Mammary epithelial cell (primary cell): ENCODE measurements at regions of chr2 and their contacts with region 1.

Region 1: GRCh38 chr2:142980561-142981378 is 103.3 kb downstream of the KYNU start:
- DNase-seq: peak; percentile 47
- H3K4me3 ChIP-seq: no peak overlapping the region
- H3K27ac ChIP-seq: peak overlapping the region; percentile 63
- H3K4me1 ChIP-seq: peaks cover 15% of the 10 kb centered on the region
- H3K27me3 ChIP-seq: no peaks in the 10 kb centered on the region
- CTCF ChIP-seq: peak; percentile 42 to 50

Region 2: DNA sequence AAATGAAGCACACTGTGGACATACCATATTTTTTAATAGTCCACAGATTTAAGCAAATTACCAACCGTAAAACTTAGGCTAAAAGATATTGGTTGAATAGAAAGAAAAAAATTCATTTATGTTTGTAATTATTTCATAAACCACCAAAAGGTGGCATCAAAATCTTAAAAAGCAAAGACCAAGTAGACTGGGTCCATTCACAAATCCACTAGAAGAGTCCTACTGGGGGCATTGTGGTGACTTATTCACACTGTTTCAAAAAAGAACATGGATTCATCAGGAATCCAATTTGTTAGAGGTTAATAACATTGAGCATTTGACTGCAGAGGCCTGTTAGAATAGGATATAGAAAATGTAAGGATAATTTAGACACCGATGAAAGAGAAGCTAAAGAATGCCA is 298.2 kb before region 1 on chr2:
- CTCF ChIA-PET with region 1: no interaction called
- dilution Hi-C with region 1: no loop called
- in situ Hi-C with region 1: loop called (anchors 5 to 10 kb)
- intact Hi-C with region 1: loop called (anchors 1 kb)
- DNase-seq: peak; percentile 17
- H3K4me3 ChIP-seq: no peak overlapping the region
- H3K27ac ChIP-seq: no peak overlapping the region
- H3K4me1 ChIP-seq: no peaks in the 10 kb centered on the region
- H3K27me3 ChIP-seq: no peaks in the 10 kb centered on the region
- CTCF ChIP-seq: peak; percentile 14 to 45

Region 3: DNA sequence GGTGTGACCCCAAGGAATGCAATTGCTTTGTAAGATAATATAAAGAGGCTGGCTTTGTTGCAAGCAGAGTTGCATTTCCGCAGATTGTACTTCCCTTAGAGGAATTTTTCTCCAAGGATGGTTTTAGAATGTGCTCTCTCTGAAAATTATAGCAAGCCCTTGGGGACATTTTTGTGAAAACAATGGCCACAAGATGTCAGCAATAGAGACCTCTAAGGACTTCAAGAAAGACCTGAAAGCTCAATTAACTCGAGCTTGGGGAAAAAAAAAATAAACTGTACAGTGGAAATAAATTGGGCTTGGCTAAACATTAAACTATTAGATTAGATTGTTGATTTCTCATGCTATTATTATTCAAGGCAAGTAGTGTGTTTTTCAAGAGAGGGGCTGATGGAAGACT is 184.6 kb before region 1 on chr2:
- CTCF ChIA-PET with region 1: no interaction called
- dilution Hi-C with region 1: no loop called
- in situ Hi-C with region 1: no loop called
- intact Hi-C with region 1: loop called (anchors 5 kb)
- DNase-seq: no peak
- H3K4me3 ChIP-seq: no peak overlapping the region
- H3K27ac ChIP-seq: no peak overlapping the region
- H3K4me1 ChIP-seq: no peaks in the 10 kb centered on the region
- H3K27me3 ChIP-seq: no peaks in the 10 kb centered on the region
- CTCF ChIP-seq: no peak

Region 4: DNA sequence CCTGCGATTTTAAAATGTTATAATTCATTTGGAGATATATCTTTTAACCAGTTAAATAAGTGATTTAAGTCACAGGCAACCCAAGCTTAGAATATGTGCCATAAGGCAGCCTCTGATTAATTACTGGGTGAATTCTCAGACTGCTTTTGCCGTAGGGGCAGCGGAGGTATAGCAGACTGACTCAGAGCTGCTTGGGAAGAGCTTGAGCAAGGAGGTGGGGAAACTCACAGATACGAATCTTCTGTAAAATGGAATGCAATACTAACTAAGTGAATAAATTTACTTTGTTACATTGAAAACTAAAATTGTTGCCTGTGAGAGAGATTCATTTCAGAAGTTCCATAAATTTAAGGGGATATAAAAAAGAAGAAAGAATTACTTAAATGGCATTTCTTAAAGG is 12.1 kb after region 1 on chr2:
- CTCF ChIA-PET with region 1: no interaction called
- dilution Hi-C with region 1: no loop called
- in situ Hi-C with region 1: no loop called
- intact Hi-C with region 1: no loop called
- DNase-seq: no peak
- H3K4me3 ChIP-seq: no peak overlapping the region
- H3K27ac ChIP-seq: no peak overlapping the region
- H3K4me1 ChIP-seq: no peaks in the 10 kb centered on the region
- H3K27me3 ChIP-seq: peaks cover 6% of the 10 kb centered on the region
- CTCF ChIP-seq: no peak

Region 5: DNA sequence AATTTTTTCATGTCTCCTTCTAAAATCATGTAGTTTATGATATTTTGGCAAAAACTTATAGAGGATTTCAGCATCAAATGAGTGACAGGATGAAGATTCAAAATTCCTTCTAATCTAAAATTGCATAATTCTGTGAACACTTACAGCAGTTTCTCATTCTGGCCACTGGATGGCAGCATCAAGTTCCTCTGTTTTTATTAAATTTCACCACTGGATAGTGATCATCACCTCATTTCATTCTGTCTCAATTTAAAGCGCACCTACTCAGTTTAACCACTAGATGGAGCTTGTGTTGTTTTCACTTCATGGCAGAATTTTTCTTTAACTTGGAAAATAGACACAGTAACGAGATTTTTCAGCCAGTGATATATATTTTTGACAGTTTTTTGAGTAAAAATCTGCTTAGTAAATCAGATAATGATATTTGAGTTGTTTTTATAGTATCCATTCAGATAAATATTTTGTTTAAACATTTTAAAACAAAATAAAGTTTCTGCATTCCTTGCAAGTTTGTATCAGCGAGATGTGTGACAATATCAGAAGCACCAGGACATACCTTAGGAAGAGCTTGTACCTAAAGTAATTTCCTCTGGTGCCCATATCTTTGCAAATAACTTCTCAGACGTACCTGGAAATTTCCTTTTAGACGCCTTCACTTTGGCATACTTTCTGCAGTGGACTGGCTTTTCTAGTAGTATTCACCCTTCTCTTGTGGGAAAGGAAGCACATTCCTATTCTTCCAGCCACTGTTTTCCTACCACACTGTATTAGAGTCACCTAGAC is 53.7 kb after region 1 on chr2:
- CTCF ChIA-PET with region 1: no interaction called
- dilution Hi-C with region 1: no loop called
- in situ Hi-C with region 1: no loop called
- intact Hi-C with region 1: no loop called
- DNase-seq: peak; percentile 73
- H3K4me3 ChIP-seq: no peak overlapping the region
- H3K27ac ChIP-seq: no peak overlapping the region
- H3K4me1 ChIP-seq: no peaks in the 10 kb centered on the region
- H3K27me3 ChIP-seq: no peaks in the 10 kb centered on the region
- CTCF ChIP-seq: peak; percentile 82 to 98